ENCODE measurements at regions of chr9 and their contacts with region 1.

Region 1: GRCh38 chr9:130701056-130702022 is 7.8 kb downstream of the EXOSC2 start:
- DNase-seq: peak; percentile 57 to 68 (median 59)
- H3K4me3 ChIP-seq: no peak overlapping the region
- H3K4me3 Mint-ChIP-seq: no peak overlapping the region
- H3K27ac ChIP-seq: no peak overlapping the region
- H3K27ac Mint-ChIP-seq: no peak overlapping the region
- H3K4me1 ChIP-seq: peaks cover 3% of the 10 kb centered on the region
- H3K4me1 Mint-ChIP-seq: peaks cover 11 to 21% (median 14%) of the 10 kb centered on the region in 4 donors
- H3K27me3 ChIP-seq: no peaks in the 10 kb centered on the region
- H3K27me3 Mint-ChIP-seq: no peaks in the 10 kb centered on the region

Region 2: DNA sequence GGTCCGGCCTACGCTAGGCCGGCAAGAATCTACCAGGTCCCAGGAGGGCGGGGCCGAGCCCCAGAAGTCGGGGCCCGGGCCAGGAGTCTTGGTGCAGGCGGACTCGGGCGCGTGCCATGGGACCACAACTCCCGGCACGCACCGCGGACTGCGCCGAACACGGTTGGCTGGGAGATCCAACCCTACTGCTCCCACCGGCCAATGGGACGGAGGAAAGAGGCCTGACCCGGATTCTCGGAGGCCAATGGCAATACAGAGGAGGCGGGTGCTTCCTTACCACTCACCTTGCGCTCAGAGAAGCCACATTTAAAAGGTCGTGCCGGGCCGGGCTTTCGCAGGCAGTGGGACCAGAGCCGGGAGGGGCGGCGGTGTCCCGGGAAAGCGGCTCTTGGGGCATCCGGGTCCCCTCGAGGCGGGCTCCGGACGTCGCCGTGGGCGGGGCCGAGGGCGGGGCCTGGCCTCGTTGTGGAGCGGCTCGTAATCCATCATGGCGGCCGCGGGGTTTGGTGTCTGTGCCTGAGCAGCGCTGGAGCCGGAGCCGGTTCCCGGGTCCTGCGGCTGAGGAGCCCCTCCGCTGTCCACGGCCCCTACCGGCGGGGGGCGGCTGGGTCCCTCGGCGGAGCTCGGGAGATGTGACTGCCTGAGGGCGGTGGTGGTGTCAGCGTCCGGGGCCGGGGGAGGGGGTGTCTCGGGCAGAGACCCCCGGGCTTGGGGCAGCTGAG is 11.4 kb after region 1 on chr9:
- CTCF ChIA-PET with region 1: interaction called, 39 read pairs
- POLR2A ChIA-PET with region 1: interaction called, 4 read pairs
- intact Hi-C with region 1: no loop called
- DNase-seq: peak; percentile 95 to 97 (median 97)
- H3K4me3 ChIP-seq: peak overlapping the region; percentile 65 to 88
- H3K4me3 Mint-ChIP-seq: peak overlapping the region; percentile 91 to 96 (median 92)
- H3K27ac ChIP-seq: peak overlapping the region; percentile 97
- H3K27ac Mint-ChIP-seq: peak overlapping the region; percentile 90 to 99 (median 97)
- H3K4me1 ChIP-seq: peaks cover 40% of the 10 kb centered on the region
- H3K4me1 Mint-ChIP-seq: peaks cover 25 to 42% (median 34%) of the 10 kb centered on the region in 4 donors
- H3K27me3 ChIP-seq: no peaks in the 10 kb centered on the region
- H3K27me3 Mint-ChIP-seq: no peaks in the 10 kb centered on the region